CD4-positive, alpha-beta memory T cell (primary cell): ENCODE measurements at regions of chr2 and their contacts with region 1.

Region 1: GRCh38 chr2:36966370-36967235 is at the start of gene STRN:
- DNase-seq: peak; percentile 97 to 100 (median 99)
- H3K4me3 ChIP-seq: peak within 1 kb of the TSS; percentile 88 to 89
- H3K4me3 Mint-ChIP-seq: peak within 1 kb of the TSS; percentile 96 to 99 (median 98)
- H3K27ac ChIP-seq: peak within 1 kb of the TSS; percentile 84
- H3K27ac Mint-ChIP-seq: peak within 1 kb of the TSS; percentile 97 to 99 (median 99)
- H3K4me1 ChIP-seq: peaks cover 43% of the 10 kb centered on the region
- H3K4me1 Mint-ChIP-seq: peaks cover 34 to 59% (median 44%) of the 10 kb centered on the region in 4 donors
- H3K27me3 ChIP-seq: no peaks in the 10 kb centered on the region
- H3K27me3 Mint-ChIP-seq: peaks cover 0 to 4% of the 10 kb centered on the region in 2 donors
- total RNA-seq, gene STRN: 29.0 to 33.4 TPM

Region 2: GRCh38 chr2:36921984-36922383 is 44.6 kb before region 1 on chr2:
- CTCF ChIA-PET with region 1: no interaction called
- POLR2A ChIA-PET with region 1: no interaction called
- intact Hi-C with region 1: no loop called
- DNase-seq: no peak
- H3K4me3 ChIP-seq: no peak overlapping the region
- H3K4me3 Mint-ChIP-seq: no peak overlapping the region
- H3K27ac ChIP-seq: no peak overlapping the region
- H3K27ac Mint-ChIP-seq: no peak overlapping the region
- H3K4me1 ChIP-seq: no peaks in the 10 kb centered on the region
- H3K4me1 Mint-ChIP-seq: peaks cover 20 to 35% (median 26%) of the 10 kb centered on the region in 4 donors
- H3K27me3 ChIP-seq: no peaks in the 10 kb centered on the region
- H3K27me3 Mint-ChIP-seq: no peaks in the 10 kb centered on the region

Region 3: DNA sequence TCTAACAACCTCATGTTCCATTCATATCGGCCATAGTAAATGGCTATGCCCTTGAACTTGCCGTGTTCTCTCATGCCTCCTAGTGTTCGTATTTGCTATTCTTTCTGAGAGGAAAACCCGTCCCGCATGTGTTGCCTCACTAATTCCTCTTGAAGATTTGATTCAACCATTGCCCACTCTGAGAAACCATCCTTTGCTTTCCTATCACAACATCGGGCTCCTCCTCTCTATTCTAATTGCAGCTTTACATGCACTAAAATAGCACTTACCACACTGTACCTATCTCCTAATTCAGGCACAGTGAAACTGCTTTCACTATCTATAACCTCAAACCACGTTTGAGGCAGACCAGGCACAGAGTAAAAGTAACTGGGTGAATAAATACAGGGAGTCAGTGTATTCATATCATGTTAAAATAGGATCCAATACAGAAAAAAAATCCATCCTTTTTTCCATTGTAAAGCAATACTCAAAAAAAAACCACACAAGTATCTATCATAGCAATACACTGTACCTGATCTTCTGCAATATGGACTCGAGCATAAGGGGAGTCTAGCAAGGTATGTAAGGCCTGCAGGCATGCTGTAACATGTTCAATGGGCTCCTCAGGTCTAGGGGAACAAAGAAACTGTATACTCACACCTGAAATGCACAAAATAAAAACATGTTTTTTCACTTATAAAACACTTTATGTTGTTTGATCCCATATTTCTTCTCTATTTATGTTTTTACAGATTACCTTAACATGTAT is 38.7 kb after region 1 on chr2:
- CTCF ChIA-PET with region 1: interaction called, 3 read pairs
- POLR2A ChIA-PET with region 1: interaction called, 4 read pairs
- intact Hi-C with region 1: loop called (anchors 2 kb)
- DNase-seq: peak; percentile 9 to 43 (median 18)
- H3K4me3 ChIP-seq: no peak overlapping the region
- H3K4me3 Mint-ChIP-seq: peak overlapping the region in 5 of 8 donors; percentile 9 to 76 (median 57)
- H3K27ac ChIP-seq: no peak overlapping the region
- H3K27ac Mint-ChIP-seq: peak overlapping the region; percentile 5 to 80 (median 62)
- H3K4me1 ChIP-seq: no peaks in the 10 kb centered on the region
- H3K4me1 Mint-ChIP-seq: peaks cover 0 to 10% (median 7%) of the 10 kb centered on the region in 4 donors
- H3K27me3 ChIP-seq: no peaks in the 10 kb centered on the region
- H3K27me3 Mint-ChIP-seq: no peaks in the 10 kb centered on the region

Region 4: DNA sequence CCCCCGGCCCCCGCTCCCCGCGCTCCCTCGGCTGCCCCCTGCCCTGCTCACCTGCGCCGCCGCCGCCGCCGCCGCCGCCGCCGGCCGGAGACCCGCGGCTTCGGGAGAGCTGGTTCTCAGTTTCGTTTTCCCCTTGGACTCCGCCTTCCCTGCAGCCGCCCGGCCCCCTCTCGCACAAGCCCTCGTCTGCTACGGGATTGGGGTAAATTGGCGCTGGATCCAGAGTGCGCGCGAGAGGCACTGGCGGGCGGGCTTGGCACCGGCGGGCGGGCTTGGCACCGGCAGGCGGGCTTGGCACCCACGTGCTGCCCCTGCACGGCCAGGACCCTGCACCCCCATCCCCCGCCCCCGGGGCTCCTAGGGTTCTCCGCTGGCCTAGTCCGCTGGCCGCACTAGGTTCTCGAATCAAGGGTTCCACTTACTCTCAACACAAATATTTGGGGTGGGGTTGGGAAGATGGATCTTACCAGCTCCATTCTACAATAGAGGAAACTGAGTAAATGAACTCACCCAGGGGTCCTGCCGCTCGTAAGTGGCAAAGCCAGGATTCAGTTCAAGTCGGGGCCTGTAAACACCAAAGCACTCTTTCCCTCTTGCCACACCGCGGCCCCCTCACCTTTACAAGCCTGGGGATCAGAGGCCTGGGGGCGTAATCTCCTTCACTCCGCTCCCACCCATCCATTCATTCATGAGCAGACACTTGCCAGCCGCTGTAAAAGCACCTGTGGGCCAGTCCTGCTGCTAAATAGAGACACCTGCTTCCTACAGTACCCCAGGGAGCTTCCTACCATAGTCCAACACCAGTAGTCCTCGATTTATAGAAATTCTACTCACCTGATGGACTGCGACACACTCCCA is 190.5 kb after region 1 on chr2 and contains the start of gene EIF2AK2:
- CTCF ChIA-PET with region 1: no interaction called
- POLR2A ChIA-PET with region 1: interaction called, 5 read pairs
- intact Hi-C with region 1: loop called (anchors 5 kb)
- DNase-seq: peak; percentile 84 to 90 (median 87)
- H3K4me3 ChIP-seq: peak within 1 kb of the TSS; percentile 62 to 63
- H3K4me3 Mint-ChIP-seq: peak within 1 kb of the TSS; percentile 88 to 96 (median 94)
- H3K27ac ChIP-seq: peak within 1 kb of the TSS; percentile 72
- H3K27ac Mint-ChIP-seq: peak within 1 kb of the TSS; percentile 86 to 96 (median 92)
- H3K4me1 ChIP-seq: peaks cover 26% of the 10 kb centered on the region
- H3K4me1 Mint-ChIP-seq: peaks cover 34 to 54% (median 49%) of the 10 kb centered on the region in 4 donors
- H3K27me3 ChIP-seq: no peaks in the 10 kb centered on the region
- H3K27me3 Mint-ChIP-seq: no peaks in the 10 kb centered on the region
- total RNA-seq, gene EIF2AK2: 28.8 to 31.6 TPM

Region 5: DNA sequence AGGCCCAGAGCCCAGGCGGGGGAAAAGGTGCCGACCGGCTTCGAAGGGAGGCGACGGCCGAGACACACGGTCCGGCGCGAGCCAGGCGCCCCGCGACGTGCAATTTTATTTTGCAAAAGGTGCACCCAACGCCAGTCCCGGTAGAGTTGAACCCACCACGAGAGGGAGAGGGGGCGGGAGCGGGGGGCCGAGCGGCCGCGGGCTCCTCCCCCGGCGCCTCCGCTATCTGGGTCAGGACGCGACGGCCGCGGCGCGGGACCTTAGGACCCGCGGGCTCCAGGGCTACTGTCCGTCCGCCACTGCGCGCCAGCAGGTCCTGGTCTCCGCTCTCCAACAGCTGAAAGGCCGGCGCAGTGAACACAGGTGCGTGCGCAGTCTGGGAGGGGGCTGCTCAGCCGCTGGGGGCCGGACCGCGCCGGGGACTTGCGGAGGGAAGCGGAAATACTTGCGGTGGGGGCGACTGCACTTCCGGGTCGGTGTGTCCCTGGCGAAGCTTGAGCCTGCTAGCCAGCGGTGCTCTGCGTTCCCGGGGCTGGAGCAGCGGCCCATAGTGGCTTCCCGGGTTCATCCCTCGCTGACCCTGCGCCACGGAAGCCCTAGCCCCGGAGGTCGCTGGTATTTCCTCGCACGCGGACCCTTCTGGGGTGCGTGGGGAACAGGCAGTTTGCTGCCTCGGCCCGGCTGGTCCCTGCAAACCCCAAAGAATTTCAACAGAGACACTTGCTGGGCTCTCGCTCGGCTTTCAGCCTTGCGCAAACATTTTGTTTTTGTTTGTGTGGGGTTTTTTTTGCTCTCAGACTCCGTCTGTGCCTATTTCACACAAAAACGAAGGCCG is 958.7 kb after region 1 on chr2 and contains the start of gene RMDN2:
- CTCF ChIA-PET with region 1: no interaction called
- POLR2A ChIA-PET with region 1: no interaction called
- intact Hi-C with region 1: loop called (anchors 5 kb)
- DNase-seq: peak; percentile 64 to 79 (median 71)
- H3K4me3 ChIP-seq: peak within 1 kb of the TSS; percentile 72 to 86
- H3K4me3 Mint-ChIP-seq: peak within 1 kb of the TSS; percentile 91 to 99 (median 96)
- H3K27ac ChIP-seq: peak within 1 kb of the TSS; percentile 43
- H3K27ac Mint-ChIP-seq: peak within 1 kb of the TSS; percentile 81 to 96 (median 88)
- H3K4me1 ChIP-seq: peaks cover 13% of the 10 kb centered on the region
- H3K4me1 Mint-ChIP-seq: peaks cover 6 to 22% (median 12%) of the 10 kb centered on the region in 4 donors
- H3K27me3 ChIP-seq: no peaks in the 10 kb centered on the region
- H3K27me3 Mint-ChIP-seq: peaks cover 0 to 1% of the 10 kb centered on the region in 2 donors
- total RNA-seq, gene RMDN2: 3.3 to 4.0 TPM